Mammary epithelial cell (primary cell): ENCODE measurements at regions of chr2 and their contacts with region 1.

Region 1: GRCh38 chr2:182666674-182667314 is 49.3 kb upstream of the DNAJC10 start:
- DNase-seq: peak; percentile 28
- H3K4me3 ChIP-seq: no peak overlapping the region
- H3K27ac ChIP-seq: no peak overlapping the region
- H3K4me1 ChIP-seq: no peaks in the 10 kb centered on the region
- H3K27me3 ChIP-seq: no peaks in the 10 kb centered on the region
- CTCF ChIP-seq: peak; percentile 47 to 60

Region 2: DNA sequence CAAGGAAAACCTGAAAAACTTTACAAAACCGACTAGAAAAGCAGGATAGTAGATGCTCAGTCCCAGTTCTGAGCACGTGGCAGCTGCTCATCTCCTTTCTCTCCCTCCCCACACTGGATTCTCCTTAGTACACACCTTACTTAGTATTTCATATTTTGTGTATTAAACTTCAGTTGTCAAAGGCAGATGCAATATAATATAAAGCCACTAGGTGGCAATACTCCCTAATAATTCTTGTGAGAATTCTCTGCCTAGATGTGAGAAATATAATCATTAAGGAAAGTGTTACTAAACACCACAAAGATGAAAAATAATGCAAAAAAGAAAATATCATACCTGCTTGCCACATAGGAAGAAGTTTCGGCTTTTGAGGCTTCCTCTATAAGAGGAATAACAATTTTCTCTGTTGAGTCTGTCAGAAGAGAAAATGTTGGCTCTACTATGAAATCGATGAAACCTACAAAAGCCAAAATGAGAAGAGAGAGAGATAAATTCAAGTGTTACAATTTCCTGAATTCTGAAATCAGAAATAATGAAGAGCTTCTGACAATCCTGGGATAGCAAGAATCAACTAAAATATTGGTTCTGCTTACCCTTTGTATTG is 480.6 kb before region 1 on chr2:
- CTCF ChIA-PET with region 1: no interaction called
- dilution Hi-C with region 1: loop called (anchors 25 kb)
- in situ Hi-C with region 1: no loop called
- intact Hi-C with region 1: no loop called
- DNase-seq: peak; percentile 17
- H3K4me3 ChIP-seq: no peak overlapping the region
- H3K27ac ChIP-seq: no peak overlapping the region
- H3K4me1 ChIP-seq: no peaks in the 10 kb centered on the region
- H3K27me3 ChIP-seq: peaks cover 3% of the 10 kb centered on the region
- CTCF ChIP-seq: peak; percentile 61 to 64

Region 3: GRCh38 chr2:182545420-182546167 is 121.2 kb before region 1 on chr2:
- CTCF ChIA-PET with region 1: no interaction called
- dilution Hi-C with region 1: no loop called
- in situ Hi-C with region 1: no loop called
- intact Hi-C with region 1: no loop called
- DNase-seq: no peak
- H3K4me3 ChIP-seq: no peak overlapping the region
- H3K27ac ChIP-seq: no peak overlapping the region
- H3K4me1 ChIP-seq: no peaks in the 10 kb centered on the region
- H3K27me3 ChIP-seq: peaks cover 2% of the 10 kb centered on the region
- CTCF ChIP-seq: no peak

Region 4: GRCh38 chr2:182682210-182682609 is 15.4 kb after region 1 on chr2:
- CTCF ChIA-PET with region 1: no interaction called
- dilution Hi-C with region 1: no loop called
- in situ Hi-C with region 1: no loop called
- intact Hi-C with region 1: no loop called
- DNase-seq: no peak
- H3K4me3 ChIP-seq: no peak overlapping the region
- H3K27ac ChIP-seq: no peak overlapping the region
- H3K4me1 ChIP-seq: no peaks in the 10 kb centered on the region
- H3K27me3 ChIP-seq: no peaks in the 10 kb centered on the region
- CTCF ChIP-seq: no peak

Region 5: DNA sequence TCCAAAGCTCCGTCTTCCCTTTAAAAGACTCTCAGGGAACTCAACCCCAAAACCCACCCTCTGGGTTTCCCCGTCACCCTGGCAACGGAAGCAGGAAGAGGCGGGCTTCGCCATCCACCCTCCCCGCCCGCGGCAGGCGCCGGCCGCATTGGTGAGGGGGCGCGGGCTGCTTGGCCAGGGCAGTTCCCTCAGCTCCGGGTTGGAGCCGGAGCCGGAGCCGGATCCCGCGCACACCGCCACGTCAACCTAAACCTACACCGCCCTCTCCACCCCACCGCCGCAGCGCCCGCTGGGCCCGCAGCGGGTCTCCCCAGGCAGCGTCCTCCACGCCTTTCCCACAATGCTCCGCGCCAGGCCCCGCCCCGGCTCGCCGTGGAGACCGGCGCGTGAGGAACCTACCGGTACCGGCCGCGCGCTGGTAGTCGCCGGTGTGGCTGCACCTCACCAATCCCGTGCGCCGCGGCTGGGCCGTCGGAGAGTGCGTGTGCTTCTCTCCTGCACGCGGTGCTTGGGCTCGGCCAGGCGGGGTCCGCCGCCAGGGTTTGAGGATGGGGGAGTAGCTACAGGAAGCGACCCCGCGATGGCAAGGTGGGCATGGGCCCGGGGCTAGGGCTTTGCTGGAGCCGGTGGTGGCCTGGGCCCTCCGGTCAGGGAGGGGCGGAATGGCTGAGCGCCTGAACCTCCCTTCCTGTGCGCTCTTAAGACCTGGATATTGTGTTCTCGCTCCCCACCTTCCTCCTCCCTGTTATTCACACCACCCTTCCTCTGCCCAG is 49.3 kb after region 1 on chr2 and contains the start of gene DNAJC10:
- CTCF ChIA-PET with region 1: interaction called, 7 read pairs
- dilution Hi-C with region 1: no loop called
- in situ Hi-C with region 1: no loop called
- intact Hi-C with region 1: loop called (anchors 1 kb)
- DNase-seq: peak; percentile 89
- H3K4me3 ChIP-seq: peak within 1 kb of the TSS; percentile 75 to 98 (median 98)
- H3K27ac ChIP-seq: peak within 1 kb of the TSS; percentile 83
- H3K4me1 ChIP-seq: peaks cover 8% of the 10 kb centered on the region
- H3K27me3 ChIP-seq: no peaks in the 10 kb centered on the region
- CTCF ChIP-seq: no peak
- total RNA-seq, gene DNAJC10: 106 to 159 TPM

Region 6: DNA sequence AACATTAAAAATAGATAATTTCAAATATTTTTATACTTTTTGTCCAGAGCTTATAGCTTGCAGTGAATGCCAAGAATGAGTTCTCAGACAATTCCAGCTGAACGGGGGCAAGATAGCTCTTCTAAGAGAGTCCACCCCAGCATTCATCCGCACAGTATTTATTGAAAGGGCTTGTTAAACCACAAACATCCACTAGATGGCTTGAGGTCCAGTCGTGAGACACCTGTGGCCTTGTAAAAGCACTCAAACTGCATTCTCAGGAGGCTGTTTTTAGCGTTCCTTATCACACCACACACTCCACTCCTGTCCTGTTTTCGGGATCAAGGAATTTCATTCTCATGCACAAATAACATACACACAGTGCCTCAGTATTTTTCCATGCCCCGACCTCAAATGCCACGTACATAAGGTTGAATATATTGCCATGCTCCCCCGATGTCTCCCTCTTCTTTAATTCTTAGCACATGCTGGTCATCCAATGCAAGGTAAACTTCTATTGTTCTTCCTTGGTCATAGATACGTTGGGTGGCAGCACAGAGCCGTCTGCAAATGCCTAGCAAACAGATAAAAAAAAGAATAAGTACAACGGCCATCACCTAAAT is 96.6 kb after region 1 on chr2:
- CTCF ChIA-PET with region 1: no interaction called
- dilution Hi-C with region 1: no loop called
- in situ Hi-C with region 1: no loop called
- intact Hi-C with region 1: no loop called
- DNase-seq: peak; percentile 16
- H3K4me3 ChIP-seq: no peak overlapping the region
- H3K27ac ChIP-seq: no peak overlapping the region
- H3K4me1 ChIP-seq: no peaks in the 10 kb centered on the region
- H3K27me3 ChIP-seq: no peaks in the 10 kb centered on the region
- CTCF ChIP-seq: peak; percentile 41 to 73

Region 7: DNA sequence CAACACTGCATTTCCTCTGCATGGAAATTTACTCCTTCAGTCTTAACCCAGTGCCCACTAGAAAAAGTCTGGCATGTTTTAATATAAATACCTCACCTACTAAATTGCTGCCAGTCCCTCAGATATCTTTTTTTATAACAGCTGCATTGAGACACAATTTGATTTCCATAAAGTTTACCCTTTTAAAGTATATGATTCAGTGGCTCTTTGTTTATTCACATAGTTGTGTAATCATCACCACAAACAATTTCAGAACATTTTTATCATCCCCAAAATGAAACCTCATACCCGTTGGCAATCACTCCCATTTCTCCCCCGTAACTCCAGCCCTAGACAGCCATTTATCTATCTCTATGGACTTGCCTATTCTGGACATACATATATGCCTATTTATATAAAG is 216.7 kb after region 1 on chr2:
- CTCF ChIA-PET with region 1: no interaction called
- dilution Hi-C with region 1: no loop called
- in situ Hi-C with region 1: no loop called
- intact Hi-C with region 1: no loop called
- DNase-seq: no peak
- H3K4me3 ChIP-seq: no peak overlapping the region
- H3K27ac ChIP-seq: no peak overlapping the region
- H3K4me1 ChIP-seq: no peaks in the 10 kb centered on the region
- H3K27me3 ChIP-seq: no peaks in the 10 kb centered on the region
- CTCF ChIP-seq: no peak

Region 8: DNA sequence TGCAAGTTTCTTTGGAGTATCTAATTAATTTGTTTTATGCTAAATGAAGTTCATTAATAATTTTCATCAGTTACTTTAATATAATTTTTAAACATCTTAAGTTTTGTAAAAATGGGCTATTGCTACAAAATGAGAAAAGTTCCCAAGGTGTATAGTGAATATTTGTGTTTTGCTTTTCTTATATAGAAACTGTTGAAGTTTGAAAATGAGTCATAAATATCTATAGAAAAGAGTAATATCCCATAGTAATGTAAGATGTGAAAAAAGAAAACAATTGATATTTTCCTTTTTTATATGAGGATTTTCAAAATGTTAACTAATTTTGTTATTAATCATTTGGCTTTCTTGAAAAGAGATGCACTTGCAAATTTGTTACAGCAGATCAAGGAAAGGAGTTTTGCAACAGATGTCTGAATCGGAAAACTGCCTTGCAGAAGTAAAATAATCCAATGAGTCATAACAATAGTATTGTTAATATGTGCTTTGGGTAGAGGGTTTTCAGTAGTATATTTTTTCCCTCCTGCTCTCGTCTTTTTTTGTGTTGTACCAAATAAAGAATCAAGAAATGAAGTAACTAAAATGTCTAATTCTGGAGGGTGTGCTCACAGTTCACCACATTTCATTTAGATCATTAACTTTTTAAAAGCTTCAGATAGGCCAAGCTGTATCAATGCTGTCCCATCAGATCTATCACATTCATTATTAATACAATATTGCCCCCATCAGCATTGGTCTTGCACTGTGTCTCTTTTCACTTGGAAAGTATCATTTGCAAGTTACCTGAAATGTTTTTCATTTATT is 427.3 kb after region 1 on chr2:
- CTCF ChIA-PET with region 1: no interaction called
- dilution Hi-C with region 1: no loop called
- in situ Hi-C with region 1: no loop called
- intact Hi-C with region 1: loop called (anchors 5 kb)
- DNase-seq: peak; percentile 8
- H3K4me3 ChIP-seq: no peak overlapping the region
- H3K27ac ChIP-seq: no peak overlapping the region
- H3K4me1 ChIP-seq: no peaks in the 10 kb centered on the region
- H3K27me3 ChIP-seq: no peaks in the 10 kb centered on the region
- CTCF ChIP-seq: no peak